Right ventricle myocardium superior (tissue), 1 donor: ENCODE measurements at regions of chr4 and their contacts with region 1.

Region 1: DNA sequence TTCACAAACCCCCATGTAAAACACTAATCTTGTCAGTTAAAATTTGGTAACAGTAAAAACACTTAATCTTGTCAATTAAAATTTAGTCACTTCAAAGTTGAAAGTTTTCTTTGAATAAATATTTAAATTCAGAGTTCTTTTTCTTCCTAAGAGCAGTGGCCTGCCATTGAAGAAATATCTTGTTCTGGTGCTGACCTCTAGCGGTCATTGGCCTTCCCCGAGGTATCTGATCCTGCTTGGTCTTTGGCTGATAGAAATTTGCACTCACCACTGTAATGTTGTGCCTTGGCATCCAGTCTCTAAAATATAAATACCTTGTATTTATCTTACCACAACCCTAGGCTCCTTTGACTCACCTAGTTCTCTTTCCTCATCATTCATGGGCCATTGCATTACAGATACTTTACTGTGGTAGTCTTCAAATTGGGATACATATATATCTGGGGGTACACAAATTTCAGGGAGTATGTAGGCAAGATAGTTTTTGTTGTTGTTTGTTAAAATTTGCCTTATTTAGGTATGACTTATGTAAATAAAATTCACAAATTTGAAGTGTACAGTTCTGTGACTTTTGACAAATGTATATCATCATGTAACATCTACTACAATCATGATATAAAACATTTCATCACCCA is 6.7 kb upstream of the ART3 start:
- DNase-seq: peak; percentile 67
- ATAC-seq: peak; percentile 82

Region 2: DNA sequence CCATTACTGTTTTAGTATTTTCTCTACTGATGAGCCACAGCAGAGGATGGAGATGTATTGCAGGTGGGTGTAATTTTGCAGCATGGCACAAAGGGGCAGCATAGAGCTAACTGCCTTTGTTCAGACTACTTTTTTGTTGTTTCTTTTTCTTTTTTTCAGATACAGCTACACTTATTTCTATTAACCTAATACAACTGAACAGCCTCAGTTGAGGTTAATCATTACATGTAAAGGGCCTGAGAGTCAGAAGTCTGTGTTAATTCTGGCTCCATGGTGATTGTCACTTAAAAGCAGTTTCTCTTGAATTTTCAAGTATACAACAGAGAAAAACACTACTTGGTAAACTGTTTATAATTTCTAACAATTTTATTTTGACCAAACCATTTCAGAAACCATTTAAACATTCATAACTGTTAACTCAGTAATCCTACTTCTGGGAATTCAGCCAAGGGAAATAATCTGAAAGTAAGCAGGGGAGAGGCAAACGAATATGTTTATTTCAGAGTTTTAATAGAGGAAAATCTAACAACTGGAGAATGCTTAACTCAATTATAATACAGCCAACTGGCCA is 151.6 kb before region 1 on chr4:
- intact Hi-C with region 1: loop called (anchors 10 kb)
- DNase-seq: no peak
- ATAC-seq: peak; percentile 60

Region 3: DNA sequence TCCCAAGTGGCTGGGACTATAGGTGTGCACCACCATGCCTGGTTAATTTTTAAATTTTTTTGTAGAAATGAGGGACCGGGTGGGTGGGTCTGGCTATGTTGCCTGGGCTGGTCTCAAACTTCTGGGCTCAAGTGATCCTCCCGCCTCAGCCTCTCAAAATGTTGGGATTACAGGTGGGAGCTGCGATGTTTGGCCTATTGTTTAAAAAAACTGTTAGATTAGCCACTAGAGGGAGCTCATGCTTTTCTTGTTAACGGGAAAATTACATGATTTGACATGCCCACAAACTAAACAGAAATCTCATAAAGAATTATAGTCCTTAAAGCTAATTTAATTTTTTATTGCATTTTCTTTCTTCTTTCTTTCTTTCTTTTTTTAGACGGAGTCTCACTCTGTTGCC is 72.0 kb before region 1 on chr4:
- intact Hi-C with region 1: loop called (anchors 2 kb)
- DNase-seq: no peak
- ATAC-seq: peak; percentile 40